Caco-2 (cell line): ENCODE measurements at regions of chr3 and their contacts with region 1.

Region 1: GRCh38 chr3:178325330-178325729 is 210.9 kb upstream of the KCNMB2 start:
- DNase-seq: no peak
- H3K4me3 ChIP-seq: no peak overlapping the region
- H3K4me3 Mint-ChIP-seq: no peak overlapping the region
- H3K27ac Mint-ChIP-seq: no peak overlapping the region
- H3K4me1 ChIP-seq: peaks cover 13% of the 10 kb centered on the region
- H3K4me1 Mint-ChIP-seq: no peaks in the 10 kb centered on the region
- H3K27me3 ChIP-seq: no peaks in the 10 kb centered on the region
- H3K27me3 Mint-ChIP-seq: no peaks in the 10 kb centered on the region
- CTCF ChIP-seq: peak; percentile 19 to 34

Region 2: GRCh38 chr3:178084938-178085816 is 240.2 kb before region 1 on chr3:
- CTCF ChIA-PET with region 1: no interaction called
- POLR2A ChIA-PET with region 1: no interaction called
- intact Hi-C with region 1: loop called (anchors 2 kb)
- DNase-seq: peak; percentile 40 to 56
- H3K4me3 ChIP-seq: no peak overlapping the region
- H3K4me3 Mint-ChIP-seq: peak overlapping the region; percentile 10
- H3K27ac Mint-ChIP-seq: no peak overlapping the region
- H3K4me1 ChIP-seq: peaks cover 26% of the 10 kb centered on the region
- H3K4me1 Mint-ChIP-seq: peaks cover 18% of the 10 kb centered on the region
- H3K27me3 ChIP-seq: no peaks in the 10 kb centered on the region
- H3K27me3 Mint-ChIP-seq: no peaks in the 10 kb centered on the region
- CTCF ChIP-seq: no peak

Region 3: DNA sequence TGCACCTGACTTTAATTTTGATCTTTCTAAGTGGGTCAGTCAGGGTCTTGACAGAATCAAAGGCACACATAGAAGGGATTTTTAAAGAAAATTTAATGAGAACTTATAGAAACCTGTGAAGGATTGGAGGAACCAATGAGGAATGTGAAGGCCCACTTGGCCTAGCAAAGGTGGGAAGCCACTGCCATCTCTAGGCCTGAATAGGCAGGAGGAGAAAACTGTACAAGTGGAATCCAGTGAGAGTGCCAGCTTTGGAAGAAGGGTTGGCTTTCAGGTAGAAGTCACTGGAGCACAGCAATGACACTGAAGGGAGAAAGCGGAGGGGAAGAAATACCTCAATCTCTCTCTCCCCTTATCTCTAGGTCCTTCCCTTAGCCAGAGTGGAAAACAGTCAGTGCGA is 169.8 kb before region 1 on chr3:
- CTCF ChIA-PET with region 1: no interaction called
- POLR2A ChIA-PET with region 1: no interaction called
- intact Hi-C with region 1: loop called (anchors 10 kb)
- DNase-seq: peak in 1 of 2 experiments; percentile 35
- H3K4me3 ChIP-seq: no peak overlapping the region
- H3K4me3 Mint-ChIP-seq: no peak overlapping the region
- H3K27ac Mint-ChIP-seq: no peak overlapping the region
- H3K4me1 ChIP-seq: no peaks in the 10 kb centered on the region
- H3K4me1 Mint-ChIP-seq: no peaks in the 10 kb centered on the region
- H3K27me3 ChIP-seq: no peaks in the 10 kb centered on the region
- H3K27me3 Mint-ChIP-seq: no peaks in the 10 kb centered on the region
- CTCF ChIP-seq: peak in 1 of 2 experiments; percentile 21

Region 4: GRCh38 chr3:178260887-178261565 is 64.3 kb before region 1 on chr3:
- CTCF ChIA-PET with region 1: no interaction called
- POLR2A ChIA-PET with region 1: no interaction called
- intact Hi-C with region 1: loop called (anchors 5 kb)
- DNase-seq: peak in 1 of 2 experiments; percentile 16
- H3K4me3 ChIP-seq: no peak overlapping the region
- H3K4me3 Mint-ChIP-seq: no peak overlapping the region
- H3K27ac Mint-ChIP-seq: no peak overlapping the region
- H3K4me1 ChIP-seq: peaks cover 7% of the 10 kb centered on the region
- H3K4me1 Mint-ChIP-seq: no peaks in the 10 kb centered on the region
- H3K27me3 ChIP-seq: no peaks in the 10 kb centered on the region
- H3K27me3 Mint-ChIP-seq: no peaks in the 10 kb centered on the region
- CTCF ChIP-seq: no peak